ENCODE measurements at regions of chr17 and their contacts with region 1.

Region 1: DNA sequence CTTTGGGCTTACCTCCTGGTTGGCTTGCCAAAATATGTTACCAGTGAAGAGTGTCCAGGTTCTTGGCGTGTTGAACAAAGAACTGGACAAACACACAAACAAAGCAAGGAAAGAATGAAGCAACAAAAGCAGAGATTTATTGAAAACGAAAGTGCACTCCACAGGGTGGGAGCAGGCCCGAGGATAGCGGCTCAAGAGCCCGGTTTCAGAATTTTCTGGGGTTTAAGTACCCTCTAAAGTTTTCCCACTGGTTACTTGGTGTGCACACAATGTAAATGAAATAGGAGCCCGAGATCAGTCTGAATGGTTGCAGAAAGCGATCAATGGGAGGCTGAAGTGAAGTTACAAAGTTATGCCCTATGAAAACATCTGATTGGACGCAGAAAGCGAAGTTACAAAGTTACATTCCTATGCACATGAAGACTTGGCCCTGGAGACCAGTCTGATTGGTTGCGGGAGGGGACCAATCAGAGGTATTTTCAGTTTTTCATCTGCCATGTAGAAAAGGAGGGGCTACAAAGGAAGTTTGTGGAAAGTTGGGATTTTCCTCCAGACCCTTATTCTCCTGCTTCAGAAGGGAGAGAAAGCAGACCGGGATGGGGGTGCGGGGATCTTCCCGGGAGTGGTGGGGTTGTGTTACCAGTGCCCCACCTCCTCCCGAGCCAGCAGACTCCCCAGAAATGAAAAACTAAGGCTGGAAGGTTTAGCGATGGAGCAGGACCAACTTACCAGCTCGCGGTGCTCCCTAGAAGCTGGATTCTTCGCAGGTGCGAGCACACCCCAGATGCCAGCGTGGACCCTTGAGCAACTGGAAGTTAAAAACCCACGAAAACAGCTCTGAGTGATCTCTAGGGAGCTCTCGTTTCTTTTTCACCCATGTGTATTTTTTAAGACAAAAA is at the start of gene SLFN12:
- DNase-seq: peak; percentile 81
- ATAC-seq: peak; percentile 92
- H3K4me3 ChIP-seq: peak within 1 kb of the TSS; percentile 74 to 96 (median 90)
- H3K4me3 Mint-ChIP-seq: peak within 1 kb of the TSS; percentile 99
- H3K27ac ChIP-seq: peak within 1 kb of the TSS; percentile 38 to 65
- H3K27ac Mint-ChIP-seq: peak within 1 kb of the TSS; percentile 95
- H3K4me1 ChIP-seq: peaks cover 18 to 22% of the 10 kb centered on the region in 2 donors
- H3K4me1 Mint-ChIP-seq: peaks cover 24% of the 10 kb centered on the region
- H3K27me3 ChIP-seq: no peaks in the 10 kb centered on the region
- H3K27me3 Mint-ChIP-seq: no peaks in the 10 kb centered on the region
- CTCF ChIP-seq: no peak
- total RNA-seq, gene SLFN12: 8.0 and 10.4 TPM in 2 replicates

Region 2: DNA sequence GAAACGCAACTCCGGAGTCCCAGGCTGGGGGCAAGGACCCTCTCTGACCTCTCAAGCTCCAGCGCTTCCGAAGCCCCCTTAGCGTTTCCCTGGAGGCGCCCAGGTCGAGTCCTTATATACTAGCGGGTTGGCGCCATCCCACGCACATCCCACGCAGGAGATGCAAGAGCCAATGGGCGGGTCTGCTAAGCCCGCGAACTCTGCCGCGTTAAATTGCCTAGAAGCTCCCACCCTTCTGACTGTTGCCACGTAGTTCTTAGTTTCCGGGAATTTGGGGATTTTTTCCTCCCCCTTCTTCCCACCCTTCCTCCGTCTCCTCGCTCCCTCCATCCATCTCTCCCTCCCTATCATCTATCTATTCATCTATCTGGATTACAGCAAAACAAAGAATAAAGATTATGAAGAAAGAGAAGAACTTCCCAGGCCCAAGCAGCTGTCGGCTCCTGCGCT is 58.9 kb before region 1 on chr17 and contains the start of gene SLFN11:
- CTCF ChIA-PET with region 1: no interaction called
- POLR2A ChIA-PET with region 1: interaction called, 4 read pairs
- intact Hi-C with region 1: loop called (anchors 2 kb)
- DNase-seq: peak; percentile 85
- ATAC-seq: peak; percentile 77
- H3K4me3 ChIP-seq: peak within 1 kb of the TSS; percentile 18 to 87 (median 72)
- H3K4me3 Mint-ChIP-seq: peak within 1 kb of the TSS; percentile 96
- H3K27ac ChIP-seq: peak within 1 kb of the TSS; percentile 79 to 85
- H3K27ac Mint-ChIP-seq: peak within 1 kb of the TSS; percentile 99
- H3K4me1 ChIP-seq: peaks cover 7 to 8% of the 10 kb centered on the region in 2 donors
- H3K4me1 Mint-ChIP-seq: peaks cover 49% of the 10 kb centered on the region
- H3K27me3 ChIP-seq: no peaks in the 10 kb centered on the region
- H3K27me3 Mint-ChIP-seq: no peaks in the 10 kb centered on the region
- CTCF ChIP-seq: no peak
- total RNA-seq, gene SLFN11: 48.1 and 52.2 TPM in 2 replicates

Region 3: DNA sequence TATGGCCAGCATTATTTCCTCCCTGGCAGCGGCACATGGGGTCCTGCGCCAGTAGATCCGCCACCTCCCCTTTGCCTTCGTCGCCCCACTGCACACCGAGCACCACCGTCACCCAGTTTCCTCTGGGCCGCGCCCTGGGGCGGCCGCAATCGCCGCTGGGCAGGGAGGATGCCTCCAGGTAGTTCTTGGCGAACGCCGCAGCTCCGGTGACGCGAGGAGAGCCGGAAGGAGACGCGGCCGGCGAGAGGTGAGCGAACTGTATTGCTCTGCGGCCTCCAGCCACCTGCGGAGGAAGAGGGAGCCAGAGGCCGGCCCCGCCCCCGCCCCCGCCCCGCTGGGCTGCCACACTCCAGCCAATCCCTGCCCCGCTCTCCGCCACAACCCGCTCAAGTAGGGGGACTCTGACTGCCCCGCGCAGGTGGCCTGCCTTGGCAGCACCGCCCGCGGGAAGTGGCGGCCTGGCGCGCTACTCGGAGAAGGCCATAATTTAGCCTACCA is 28.0 kb after region 1 on chr17:
- CTCF ChIA-PET with region 1: interaction called, 4 read pairs
- POLR2A ChIA-PET with region 1: no interaction called
- intact Hi-C with region 1: loop called (anchors 1 kb)
- DNase-seq: peak; percentile 92
- ATAC-seq: peak; percentile 92
- H3K4me3 ChIP-seq: peak overlapping the region in 4 of 5 experiments; percentile 11 to 56 (median 42)
- H3K4me3 Mint-ChIP-seq: peak overlapping the region; percentile 88
- H3K27ac ChIP-seq: peak overlapping the region; percentile 22 to 39
- H3K27ac Mint-ChIP-seq: peak overlapping the region; percentile 87
- H3K4me1 ChIP-seq: peaks cover 12 to 13% of the 10 kb centered on the region in 2 donors
- H3K4me1 Mint-ChIP-seq: peaks cover 21% of the 10 kb centered on the region
- H3K27me3 ChIP-seq: no peaks in the 10 kb centered on the region
- H3K27me3 Mint-ChIP-seq: no peaks in the 10 kb centered on the region
- CTCF ChIP-seq: no peak

Region 4: GRCh38 chr17:35486920-35487732 is 54.7 kb after region 1 on chr17:
- CTCF ChIA-PET with region 1: interaction called, 9 read pairs
- POLR2A ChIA-PET with region 1: no interaction called
- intact Hi-C with region 1: loop called (anchors 1 kb)
- DNase-seq: peak; percentile 65
- ATAC-seq: peak; percentile 53
- H3K4me3 ChIP-seq: peak overlapping the region; percentile 67 to 94 (median 79)
- H3K4me3 Mint-ChIP-seq: peak overlapping the region; percentile 98
- H3K27ac ChIP-seq: no peak overlapping the region
- H3K27ac Mint-ChIP-seq: peak overlapping the region; percentile 87
- H3K4me1 ChIP-seq: peaks cover 22 to 23% of the 10 kb centered on the region in 2 donors
- H3K4me1 Mint-ChIP-seq: peaks cover 25% of the 10 kb centered on the region
- H3K27me3 ChIP-seq: peaks cover 0 to 44% (median 35%) of the 10 kb centered on the region in 4 experiments
- H3K27me3 Mint-ChIP-seq: peaks cover 36% of the 10 kb centered on the region
- CTCF ChIP-seq: no peak

Measured in B cell (primary cell).